ENCODE measurements at regions of chr16 and their contacts with region 1.

Region 1: GRCh38 chr16:79601931-79602627 is 1.5 kb upstream of the MAF start:
- DNase-seq: peak; percentile 64
- H3K4me3 ChIP-seq: no peak overlapping the region
- H3K27ac ChIP-seq: no peak overlapping the region
- H3K4me1 ChIP-seq: no peaks in the 10 kb centered on the region
- H3K27me3 ChIP-seq: peaks cover 22 to 33% of the 10 kb centered on the region in 2 experiments
- CTCF ChIP-seq: peak; percentile 68 to 74
- POLR2A ChIP-seq: no peak

Region 2: DNA sequence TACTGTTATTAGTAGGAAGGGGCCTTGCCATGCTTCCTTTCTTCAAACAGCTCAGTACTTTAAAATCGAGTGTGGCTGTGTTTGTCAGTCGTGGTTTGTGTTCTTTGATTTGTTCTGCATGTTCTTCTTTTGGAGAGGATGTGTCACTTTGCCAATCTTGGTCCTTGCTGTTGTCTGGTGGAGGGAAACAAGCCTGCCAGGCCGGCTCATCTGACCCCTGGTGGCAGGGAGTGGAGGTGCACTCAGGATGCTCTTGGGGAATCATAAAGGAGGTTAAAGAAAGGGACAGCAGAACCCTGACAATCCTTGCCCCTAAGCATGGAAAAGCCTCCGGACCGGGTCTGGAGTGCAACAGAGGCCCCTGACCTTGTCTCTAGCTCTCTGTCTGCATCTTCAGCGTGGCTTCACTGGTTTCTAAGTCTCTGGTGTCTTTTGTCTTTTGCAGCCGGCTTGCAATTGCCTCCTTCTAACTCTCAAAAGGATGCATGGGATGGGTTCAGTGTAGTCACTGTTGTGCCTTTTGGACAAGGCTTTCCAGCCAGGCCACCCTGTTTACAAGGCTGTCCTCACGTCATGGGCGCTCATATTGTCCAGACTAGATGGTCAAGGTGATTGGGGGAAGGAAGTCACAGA is 1366.8 kb before region 1 on chr16:
- CTCF ChIA-PET with region 1: no interaction called
- POLR2A ChIA-PET with region 1: no interaction called
- dilution Hi-C with region 1: no loop called
- intact Hi-C with region 1: loop called (anchors 5 kb)
- DNase-seq: peak; percentile 78
- H3K4me3 ChIP-seq: no peak overlapping the region
- H3K27ac ChIP-seq: no peak overlapping the region
- H3K4me1 ChIP-seq: no peaks in the 10 kb centered on the region
- H3K27me3 ChIP-seq: no peaks in the 10 kb centered on the region
- CTCF ChIP-seq: peak; percentile 89 to 96
- POLR2A ChIP-seq: no peak

Region 3: DNA sequence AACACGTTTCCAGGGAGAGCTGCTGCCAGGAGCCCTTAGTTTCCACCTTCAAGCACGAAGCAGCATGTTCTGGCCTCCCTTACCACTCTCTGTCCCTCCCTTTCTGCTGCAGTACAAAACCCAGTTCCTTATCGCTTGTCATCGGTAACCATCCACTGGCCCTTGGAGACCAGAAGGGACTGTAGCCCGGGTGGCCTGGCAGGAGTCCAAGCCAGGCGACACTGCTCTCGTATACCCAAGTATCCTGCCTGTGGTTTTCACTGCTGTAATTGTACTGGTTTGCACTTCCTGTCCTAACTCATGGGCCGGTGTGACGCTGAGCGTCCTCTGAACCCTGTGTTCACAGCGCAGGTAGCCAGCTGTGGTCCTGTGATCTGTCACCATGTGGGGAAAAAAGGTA is 82.6 kb before region 1 on chr16:
- CTCF ChIA-PET with region 1: no interaction called
- POLR2A ChIA-PET with region 1: no interaction called
- dilution Hi-C with region 1: no loop called
- intact Hi-C with region 1: no loop called
- DNase-seq: no peak
- H3K4me3 ChIP-seq: no peak overlapping the region
- H3K27ac ChIP-seq: no peak overlapping the region
- H3K4me1 ChIP-seq: no peaks in the 10 kb centered on the region
- H3K27me3 ChIP-seq: no peaks in the 10 kb centered on the region
- CTCF ChIP-seq: no peak
- POLR2A ChIP-seq: no peak

Region 4: DNA sequence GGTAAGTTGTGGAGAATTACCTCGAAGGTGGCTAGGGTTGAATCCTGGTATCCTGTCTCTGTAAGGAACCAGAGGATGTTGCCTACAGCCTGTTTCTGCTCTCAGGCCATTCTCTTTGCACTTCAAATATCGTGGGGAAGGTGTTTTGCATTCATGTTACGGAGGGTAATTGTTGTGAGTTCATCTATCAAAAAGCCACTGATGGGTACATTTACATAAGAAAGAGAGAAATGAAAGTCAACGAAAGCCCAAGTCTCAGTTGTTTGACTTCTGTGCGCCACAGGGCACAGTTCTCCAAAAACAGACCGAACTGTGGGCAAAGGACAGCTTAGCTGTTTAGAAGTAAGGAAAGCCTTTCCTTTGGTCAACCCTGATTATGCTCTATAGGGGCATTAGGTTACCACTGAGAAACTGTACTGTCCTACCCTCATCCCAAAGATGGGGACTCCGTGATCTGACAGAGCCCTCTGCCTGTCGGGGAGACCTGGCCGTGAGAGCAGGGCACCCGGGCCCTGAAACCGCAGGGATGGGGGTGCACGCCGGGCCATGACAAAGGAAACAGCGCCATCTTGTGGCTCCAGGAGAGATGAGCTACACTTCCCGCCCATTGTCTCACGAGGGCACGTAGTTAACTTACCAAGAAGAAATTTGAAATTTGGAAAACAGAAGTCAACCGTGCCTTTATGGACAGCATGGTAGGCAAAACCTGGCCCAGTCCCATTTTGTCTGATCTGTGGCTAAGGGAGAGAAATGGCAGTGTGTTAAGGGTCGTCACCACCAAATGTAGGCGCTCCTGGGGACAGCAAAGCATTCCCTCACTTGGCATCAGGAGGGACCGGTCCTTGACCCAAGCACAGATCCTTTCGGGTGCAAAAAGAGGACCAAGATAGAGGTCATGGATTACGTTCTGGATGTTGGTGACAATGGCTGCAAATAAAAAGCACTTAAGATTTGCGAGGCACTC is 864.2 kb after region 1 on chr16:
- CTCF ChIA-PET with region 1: interaction called, 19 read pairs
- POLR2A ChIA-PET with region 1: no interaction called
- dilution Hi-C with region 1: no loop called
- intact Hi-C with region 1: loop called (anchors 2 kb)
- DNase-seq: peak; percentile 39
- H3K4me3 ChIP-seq: no peak overlapping the region
- H3K27ac ChIP-seq: no peak overlapping the region
- H3K4me1 ChIP-seq: no peaks in the 10 kb centered on the region
- H3K27me3 ChIP-seq: no peaks in the 10 kb centered on the region
- CTCF ChIP-seq: peak; percentile 78 to 84
- POLR2A ChIP-seq: no peak